WTC11 (cell line): ENCODE measurements at regions of chr16 and their contacts with region 1.

Region 1: GRCh38 chr16:57462209-57462977 is at the start of gene POLR2C:
- DNase-seq: peak; percentile 94
- ATAC-seq: peak; percentile 93
- H3K4me3 Mint-ChIP-seq: peak within 1 kb of the TSS; percentile 100
- H3K27ac Mint-ChIP-seq: peak within 1 kb of the TSS; percentile 99
- H3K4me1 Mint-ChIP-seq: peaks cover 4% of the 10 kb centered on the region
- H3K27me3 Mint-ChIP-seq: no peaks in the 10 kb centered on the region
- CTCF ChIP-seq: peak; percentile 95
- total RNA-seq, gene POLR2C: 67.9 to 75.4 TPM (median 67.9 TPM) in 3 replicates

Region 2: DNA sequence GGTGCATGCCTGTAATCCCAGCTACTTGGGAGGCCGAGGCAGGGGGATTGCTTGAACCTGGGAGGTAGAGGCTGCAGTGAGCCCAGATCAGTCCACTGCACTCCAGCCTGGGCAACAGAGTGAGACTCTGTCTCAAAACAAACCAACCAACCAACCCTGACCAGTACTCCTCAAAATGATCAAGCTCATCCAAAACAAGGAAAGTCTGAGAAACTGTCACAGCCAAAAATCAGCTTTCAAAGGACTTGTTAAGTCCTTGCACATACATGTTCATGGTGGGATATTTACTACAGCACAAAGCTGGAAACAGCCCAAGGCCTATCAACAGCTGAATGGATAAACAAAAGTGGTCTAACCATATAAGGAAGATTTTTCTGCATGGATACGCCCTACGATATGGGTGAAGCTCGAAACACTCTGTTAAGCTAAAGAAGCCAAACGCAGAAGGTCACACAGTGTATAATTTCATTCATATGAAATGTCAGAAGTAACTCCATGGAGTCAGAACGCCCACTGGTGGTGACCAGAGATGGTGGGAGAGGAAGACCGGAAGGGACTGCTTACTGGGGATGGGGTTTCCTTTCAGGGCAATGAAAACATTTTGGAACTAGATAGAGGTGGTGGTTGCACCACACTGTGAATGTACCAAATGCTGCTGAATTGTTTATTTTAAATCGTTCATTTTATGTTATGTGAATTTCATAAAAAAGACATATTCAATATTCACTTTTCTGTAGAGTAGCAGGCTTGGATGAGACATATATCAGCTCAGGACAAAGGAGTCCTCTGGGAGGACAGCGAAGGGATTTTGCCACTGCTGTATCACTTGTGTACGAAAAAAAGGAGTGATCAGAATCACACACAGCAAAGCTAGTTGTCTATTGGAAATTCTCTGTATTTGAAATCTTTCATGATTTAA is 40.1 kb before region 1 on chr16:
- CTCF ChIA-PET with region 1: interaction called, 14 read pairs
- POLR2A ChIA-PET with region 1: no interaction called
- DNase-seq: peak; percentile 50
- ATAC-seq: peak; percentile 37
- H3K4me3 Mint-ChIP-seq: no peak overlapping the region; the same call in 1 of the 2 replicates
- H3K27ac Mint-ChIP-seq: no peak overlapping the region; the same call in 1 of the 2 replicates
- H3K4me1 Mint-ChIP-seq: peaks cover 26% of the 10 kb centered on the region
- H3K27me3 Mint-ChIP-seq: no peaks in the 10 kb centered on the region
- CTCF ChIP-seq: no peak; the same call in 1 of the 2 replicates

Region 3: DNA sequence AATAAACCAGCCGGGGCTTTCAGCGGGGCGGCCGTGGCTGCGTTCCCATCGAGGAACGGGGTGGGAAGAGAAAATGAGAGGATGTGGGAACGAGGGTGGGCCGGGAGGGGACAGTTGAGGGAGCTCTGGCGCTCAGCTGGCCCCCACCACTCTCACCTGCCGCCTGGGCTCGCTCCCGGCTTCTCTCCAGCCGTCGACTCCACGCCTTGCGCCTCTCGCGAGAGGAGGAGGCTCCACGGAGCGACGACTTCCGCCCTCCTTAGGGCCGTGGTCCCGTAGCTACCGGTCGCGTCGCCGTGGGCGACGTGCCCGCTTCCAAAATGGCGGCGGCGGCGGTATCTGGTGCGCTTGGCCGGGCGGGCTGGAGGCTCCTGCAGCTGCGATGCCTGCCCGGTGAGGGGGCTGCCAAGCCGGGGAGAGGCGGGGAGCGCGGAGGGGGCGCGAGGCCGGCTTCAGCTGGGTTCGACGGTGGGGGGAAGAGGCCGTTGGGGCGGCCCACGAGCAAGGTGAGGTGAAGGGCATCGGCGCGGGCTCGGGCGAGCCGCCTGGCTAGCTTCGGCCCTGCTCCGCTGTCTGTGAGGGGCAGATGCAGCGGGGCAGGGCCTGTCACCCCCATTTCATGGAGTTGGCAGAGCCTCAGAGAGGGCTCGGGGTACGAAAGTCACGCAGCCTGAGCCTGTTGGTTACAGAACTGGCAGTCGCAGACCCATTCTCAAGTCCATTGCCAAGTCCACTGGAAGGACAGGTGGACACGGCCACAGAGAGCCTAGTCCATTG is 15.0 kb before region 1 on chr16 and contains the starts of genes CIAPIN1 and COQ9:
- CTCF ChIA-PET with region 1: interaction called, 36 read pairs
- POLR2A ChIA-PET with region 1: interaction called, 9 read pairs
- DNase-seq: peak; percentile 92
- ATAC-seq: peak; percentile 99
- H3K4me3 Mint-ChIP-seq: peak within 1 kb of the TSS; percentile 91
- H3K27ac Mint-ChIP-seq: peak within 1 kb of the TSS; percentile 32
- H3K4me1 Mint-ChIP-seq: peaks cover 13% of the 10 kb centered on the region
- H3K27me3 Mint-ChIP-seq: no peaks in the 10 kb centered on the region
- CTCF ChIP-seq: no peak
- total RNA-seq, gene CIAPIN1: 85.9 to 94.7 TPM (median 87.9 TPM) in 3 replicates
- total RNA-seq, gene COQ9: 39.2 to 40.2 TPM (median 39.8 TPM) in 3 replicates

Region 4: DNA sequence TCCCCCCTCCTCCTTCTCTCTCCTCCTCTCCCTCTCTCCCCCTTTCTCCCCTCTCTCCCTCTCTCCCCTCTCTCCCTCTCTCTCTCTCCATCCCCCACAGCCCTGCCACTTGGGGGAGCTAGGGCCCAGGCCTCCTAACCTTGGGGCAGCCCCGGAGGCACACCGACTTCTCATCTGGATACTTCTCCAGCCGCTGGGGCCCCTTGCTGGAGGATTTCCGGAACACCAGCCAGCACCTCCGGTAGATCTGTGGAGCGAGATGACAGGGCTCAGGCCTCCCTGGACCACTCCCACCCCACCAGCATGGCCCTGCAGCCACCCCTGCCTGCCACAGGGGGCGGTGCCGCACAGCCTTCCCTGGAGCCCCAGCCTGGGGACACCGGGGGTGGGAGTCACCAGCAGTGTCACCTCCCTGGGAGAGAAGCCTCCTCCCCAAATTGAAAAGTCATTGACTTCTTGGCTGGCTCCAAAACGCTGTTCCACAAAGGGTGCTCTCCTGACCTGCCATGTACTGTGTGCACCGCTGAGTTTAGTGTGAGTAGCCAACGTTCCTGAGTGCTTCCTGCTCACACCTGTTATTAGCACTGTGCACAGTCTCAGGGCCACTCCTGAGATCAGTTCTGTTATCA is 13.4 kb after region 1 on chr16:
- CTCF ChIA-PET with region 1: interaction called, 63 read pairs
- POLR2A ChIA-PET with region 1: interaction called, 3 read pairs
- DNase-seq: peak; percentile 95
- ATAC-seq: peak; percentile 81
- H3K4me3 Mint-ChIP-seq: peak overlapping the region; percentile 43; the same call in 1 of the 2 replicates
- H3K27ac Mint-ChIP-seq: peak overlapping the region; percentile 27; the same call in 1 of the 2 replicates
- H3K4me1 Mint-ChIP-seq: peaks cover 75% of the 10 kb centered on the region
- H3K27me3 Mint-ChIP-seq: peaks cover 6% of the 10 kb centered on the region
- CTCF ChIP-seq: peak; percentile 72

Region 5: GRCh38 chr16:57528491-57529390 is 66.3 kb after region 1 on chr16:
- CTCF ChIA-PET with region 1: interaction called, 22 read pairs
- POLR2A ChIA-PET with region 1: interaction called, 3 read pairs
- DNase-seq: peak; percentile 91
- ATAC-seq: peak; percentile 61
- H3K4me3 Mint-ChIP-seq: peak overlapping the region; percentile 71
- H3K27ac Mint-ChIP-seq: peak overlapping the region; percentile 77; the same call in 1 of the 2 replicates
- H3K4me1 Mint-ChIP-seq: peaks cover 55% of the 10 kb centered on the region
- H3K27me3 Mint-ChIP-seq: peaks cover 24% of the 10 kb centered on the region
- CTCF ChIP-seq: no peak